ENCODE measurements at regions of chr9 and their contacts with region 1.

Region 1: GRCh38 chr9:20054734-20055133 is 265.9 kb upstream of the SLC24A2 start:
- DNase-seq: no peak
- ATAC-seq: no peak
- H3K4me3 ChIP-seq: no peak overlapping the region
- H3K27ac ChIP-seq: no peak overlapping the region
- H3K4me1 ChIP-seq: no peaks in the 10 kb centered on the region
- H3K27me3 ChIP-seq: peaks cover 36% of the 10 kb centered on the region
- CTCF ChIP-seq: no peak
- POLR2A ChIP-seq: no peak
- RAD21 ChIP-seq: no peak

Region 2: DNA sequence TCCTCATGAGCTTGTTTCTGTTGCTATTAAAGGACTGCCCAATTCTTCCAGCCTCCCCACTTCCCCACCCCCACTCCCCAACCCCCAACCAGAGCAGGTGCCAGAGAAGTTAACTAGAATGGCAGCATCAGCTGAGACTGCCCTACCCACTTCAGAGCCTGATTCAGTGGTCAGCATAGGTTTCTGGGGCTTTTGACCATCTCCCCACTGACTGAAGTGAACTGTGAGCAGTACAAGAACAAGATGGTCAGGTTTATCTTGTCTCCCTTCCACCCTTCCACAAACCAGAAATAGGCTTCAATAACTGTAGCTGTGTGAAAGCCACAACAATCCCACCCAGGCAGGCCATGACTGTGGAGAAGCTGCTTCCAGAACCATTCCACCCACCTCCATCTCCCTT is 23.5 kb after region 1 on chr9:
- CTCF ChIA-PET with region 1: no interaction called
- POLR2A ChIA-PET with region 1: no interaction called
- RAD21 ChIA-PET with region 1: no interaction called
- intact Hi-C with region 1: no loop called
- DNase-seq: no peak
- ATAC-seq: no peak
- H3K4me3 ChIP-seq: no peak overlapping the region
- H3K27ac ChIP-seq: no peak overlapping the region
- H3K4me1 ChIP-seq: no peaks in the 10 kb centered on the region
- H3K27me3 ChIP-seq: peaks cover 12% of the 10 kb centered on the region; the same call in 1 of the 2 replicates
- CTCF ChIP-seq: no peak
- POLR2A ChIP-seq: no peak
- RAD21 ChIP-seq: no peak

Region 3: GRCh38 chr9:20112205-20112783 is 57.6 kb after region 1 on chr9:
- CTCF ChIA-PET with region 1: no interaction called
- POLR2A ChIA-PET with region 1: no interaction called
- RAD21 ChIA-PET with region 1: no interaction called
- intact Hi-C with region 1: loop called (anchors 10 kb)
- DNase-seq: no peak
- ATAC-seq: no peak
- H3K4me3 ChIP-seq: no peak overlapping the region
- H3K27ac ChIP-seq: no peak overlapping the region
- H3K4me1 ChIP-seq: no peaks in the 10 kb centered on the region
- H3K27me3 ChIP-seq: peaks cover 28% of the 10 kb centered on the region
- CTCF ChIP-seq: no peak
- POLR2A ChIP-seq: no peak
- RAD21 ChIP-seq: no peak

Region 4: DNA sequence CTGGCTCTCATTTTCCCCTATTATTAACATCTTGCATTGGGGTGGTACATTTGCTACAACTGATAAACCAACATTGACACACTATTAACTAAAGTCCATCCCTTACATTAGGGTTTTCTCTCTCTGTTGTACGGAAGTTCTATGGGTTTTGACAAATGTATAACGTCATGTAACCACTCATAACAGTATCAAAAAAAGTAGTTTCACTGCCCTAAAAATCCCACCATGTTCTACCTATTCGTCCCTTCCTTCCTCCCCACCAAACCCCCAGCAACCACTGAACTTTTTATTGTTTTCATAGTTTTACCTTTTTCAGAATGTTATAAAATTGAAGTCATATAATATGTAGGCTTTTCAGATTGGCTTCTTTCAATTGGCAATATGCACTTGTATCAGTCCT is 527.4 kb after region 1 on chr9:
- CTCF ChIA-PET with region 1: no interaction called
- POLR2A ChIA-PET with region 1: no interaction called
- RAD21 ChIA-PET with region 1: no interaction called
- intact Hi-C with region 1: no loop called
- DNase-seq: no peak
- ATAC-seq: no peak
- H3K4me3 ChIP-seq: no peak overlapping the region
- H3K27ac ChIP-seq: no peak overlapping the region
- H3K4me1 ChIP-seq: no peaks in the 10 kb centered on the region
- H3K27me3 ChIP-seq: no peaks in the 10 kb centered on the region; the same call in 1 of the 2 replicates
- CTCF ChIP-seq: no peak
- POLR2A ChIP-seq: no peak
- RAD21 ChIP-seq: no peak